MCF 10A (cell line): ENCODE measurements at regions of chr1 and their contacts with region 1.

Region 1: DNA sequence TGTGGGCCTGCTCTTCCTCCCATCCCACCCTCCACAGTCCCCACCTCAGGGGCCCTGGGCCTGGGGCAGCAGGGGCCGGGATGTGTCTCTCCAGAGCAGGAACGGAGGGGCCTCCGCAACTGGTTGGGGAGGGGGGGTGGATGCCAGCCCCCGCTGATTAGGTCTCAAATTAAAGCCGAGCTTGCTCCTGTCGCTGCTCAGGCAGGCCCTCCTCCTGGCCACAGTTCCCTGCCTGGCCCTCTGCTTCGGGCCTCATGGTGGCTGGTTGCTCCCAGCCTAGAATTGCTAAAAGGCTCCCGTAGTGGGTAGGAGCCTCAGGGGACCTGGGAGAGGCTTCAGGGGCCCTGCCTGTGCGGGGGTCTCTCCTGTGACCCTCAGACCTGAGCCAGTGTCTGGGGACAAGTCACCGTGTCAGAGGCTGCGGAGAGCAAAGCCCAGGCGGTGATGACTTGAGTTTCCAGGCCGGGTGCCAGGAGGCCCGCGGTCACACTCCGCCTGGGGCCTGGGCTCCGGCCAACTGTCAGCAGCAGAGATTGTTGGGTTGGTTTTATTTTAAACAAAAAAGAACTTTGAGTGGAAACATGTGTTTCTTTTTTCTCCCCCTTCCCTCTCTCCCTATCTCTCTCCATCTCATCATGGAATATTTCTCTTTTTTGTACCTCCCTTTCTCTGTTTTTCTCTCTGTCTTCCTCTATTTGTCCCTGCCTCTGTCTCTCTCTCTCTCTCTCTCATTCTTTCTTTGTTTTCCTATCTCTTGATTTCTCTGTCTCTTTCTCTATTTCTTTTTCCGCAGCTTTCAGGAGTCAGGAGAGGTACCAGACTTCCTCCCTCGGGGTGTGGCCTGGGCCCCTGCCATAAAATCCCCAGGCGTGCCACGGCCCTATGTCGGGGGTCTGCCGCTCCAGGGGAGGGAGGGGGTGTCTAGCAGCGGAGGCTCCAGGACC is 20.0 kb upstream of the EPHA2 start:
- DNase-seq: peak; percentile 80
- H3K4me3 Mint-ChIP-seq: peak overlapping the region; percentile 6
- H3K27ac Mint-ChIP-seq: peak overlapping the region; percentile 71
- H3K4me1 Mint-ChIP-seq: peaks cover 52% of the 10 kb centered on the region
- H3K27me3 Mint-ChIP-seq: no peaks in the 10 kb centered on the region
- CTCF ChIP-seq: no peak

Region 2: DNA sequence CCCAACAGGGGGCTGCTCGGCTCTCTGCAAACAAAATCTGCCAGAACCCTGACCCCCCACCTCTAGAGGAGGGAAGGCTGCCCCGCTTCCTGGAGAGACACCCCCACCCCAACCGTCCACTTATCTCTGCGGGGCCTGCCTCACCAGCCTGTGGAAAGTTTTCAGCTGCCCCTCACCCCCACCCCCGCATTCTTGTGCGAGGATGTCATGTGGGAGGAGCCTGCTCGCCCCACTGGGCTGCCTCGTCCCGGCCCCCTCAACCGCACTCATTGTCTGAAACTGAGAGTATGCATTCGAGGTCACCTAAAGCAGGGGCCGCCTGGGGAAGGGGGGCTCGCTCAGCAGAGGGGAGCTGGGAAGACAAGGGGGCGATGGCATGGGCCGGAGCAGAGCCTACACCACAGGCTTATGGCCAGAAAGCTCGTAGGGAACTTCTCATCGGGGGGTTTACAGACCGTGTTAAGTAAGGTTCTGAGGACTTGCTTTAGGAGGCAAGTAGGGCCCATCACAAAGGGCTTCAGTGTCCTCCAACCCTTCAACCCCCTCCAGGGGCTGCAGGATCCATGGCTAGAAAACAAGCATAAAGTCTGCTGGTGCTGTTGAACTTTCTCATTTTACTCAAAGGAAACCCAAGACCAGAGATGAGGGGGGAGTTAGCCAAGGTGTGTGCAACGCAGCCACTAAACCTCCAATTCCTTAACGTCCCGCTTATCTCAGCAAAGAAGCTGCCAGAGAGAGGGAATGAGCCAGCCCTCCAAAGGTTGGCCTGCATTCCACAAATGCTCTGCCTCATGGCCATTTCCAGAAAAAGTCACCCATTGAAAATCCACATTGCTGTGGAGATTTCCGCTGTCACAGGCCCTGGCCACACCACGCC is 29.4 kb before region 1 on chr1:
- CTCF ChIA-PET with region 1: no interaction called
- POLR2A ChIA-PET with region 1: interaction called, 63 read pairs
- intact Hi-C with region 1: loop called (anchors 5 kb)
- DNase-seq: peak; percentile 80
- H3K4me3 Mint-ChIP-seq: peak overlapping the region; percentile 69
- H3K27ac Mint-ChIP-seq: peak overlapping the region; percentile 53
- H3K4me1 Mint-ChIP-seq: peaks cover 57% of the 10 kb centered on the region
- H3K27me3 Mint-ChIP-seq: no peaks in the 10 kb centered on the region
- CTCF ChIP-seq: no peak

Region 3: GRCh38 chr1:16164213-16165072 is 11.4 kb before region 1 on chr1:
- CTCF ChIA-PET with region 1: interaction called, 4 read pairs
- POLR2A ChIA-PET with region 1: interaction called, 20 read pairs
- intact Hi-C with region 1: no loop called
- DNase-seq: peak; percentile 91
- H3K4me3 Mint-ChIP-seq: no peak overlapping the region
- H3K27ac Mint-ChIP-seq: peak overlapping the region; percentile 57
- H3K4me1 Mint-ChIP-seq: peaks cover 22% of the 10 kb centered on the region
- H3K27me3 Mint-ChIP-seq: no peaks in the 10 kb centered on the region
- CTCF ChIP-seq: no peak